SK-N-SH (cell line): ENCODE measurements at regions of chr4 and their contacts with region 1.

Region 1: DNA sequence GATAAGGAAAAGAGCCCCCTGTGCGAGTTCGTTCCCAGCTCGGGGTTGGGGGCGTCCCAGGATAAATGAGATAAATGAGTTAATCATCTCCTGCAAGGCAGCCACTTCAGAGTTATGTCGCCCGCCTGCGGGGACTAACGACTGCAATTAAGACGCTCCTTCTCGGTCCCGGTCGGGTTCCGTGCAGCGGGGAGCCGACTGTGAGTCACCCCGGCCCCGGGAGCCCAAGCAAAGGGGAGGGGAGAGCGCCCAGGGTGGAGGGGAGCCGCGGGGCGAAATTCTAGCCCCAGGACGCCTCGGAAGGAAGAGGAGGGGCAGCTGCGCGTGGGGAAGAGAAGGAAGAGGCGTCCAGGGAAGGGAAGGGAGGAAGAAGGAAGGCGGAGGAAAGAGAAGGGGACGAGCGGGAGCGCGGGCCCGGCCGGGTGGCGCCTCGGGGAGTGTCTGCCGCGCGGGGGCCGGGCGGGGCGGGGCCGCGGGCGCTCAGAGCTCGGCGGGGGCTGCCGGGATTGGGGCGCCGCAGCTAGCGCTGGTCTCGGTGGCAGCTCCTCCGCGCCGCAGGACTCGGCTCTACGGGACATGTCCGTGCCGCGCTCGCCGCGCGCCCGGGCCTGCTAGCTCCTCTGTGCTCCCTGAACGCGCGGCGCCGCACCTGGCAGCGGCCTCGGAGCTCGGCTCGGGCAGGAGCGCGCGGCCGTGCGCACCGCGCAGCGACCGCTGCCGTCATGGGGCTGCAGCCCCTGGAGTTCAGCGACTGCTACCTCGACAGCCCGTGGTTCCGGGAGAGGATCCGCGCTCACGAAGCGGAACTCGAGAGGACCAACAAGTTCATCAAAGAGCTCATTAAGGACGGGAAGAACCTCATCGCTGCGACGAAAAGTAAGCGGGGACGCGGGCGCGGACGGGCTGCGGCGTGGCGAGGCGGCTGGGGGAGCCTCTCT is at the start of gene ARHGAP10:
- DNase-seq: peak; percentile 85
- H3K4me3 ChIP-seq: peak within 1 kb of the TSS; percentile 92 to 94
- H3K27ac ChIP-seq: peak within 1 kb of the TSS; percentile 77 to 91
- H3K4me1 ChIP-seq: peaks cover 25 to 29% of the 10 kb centered on the region in 2 experiments; a peak in 3 of 4 replicates
- H3K27me3 ChIP-seq: no peaks in the 10 kb centered on the region
- CTCF ChIP-seq: no peak
- EP300 ChIP-seq: no peak; a peak in 1 of 4 replicates
- RAD21 ChIP-seq: no peak
- polyA plus RNA-seq, gene ARHGAP10: 12.0 and 15.1 TPM in 2 replicates

Region 2: GRCh38 chr4:147714575-147715401 is 17.1 kb before region 1 on chr4:
- CTCF ChIA-PET with region 1: interaction called, 12 read pairs
- POLR2A ChIA-PET with region 1: no interaction called
- DNase-seq: no peak
- H3K4me3 ChIP-seq: peak overlapping the region in 1 of 2 experiments; percentile 28; a peak in 1 of 4 replicates
- H3K27ac ChIP-seq: peak overlapping the region in 1 of 2 experiments; percentile 72; a peak in 3 of 4 replicates
- H3K4me1 ChIP-seq: 0 out of 4 replicates have a peak, but pooled peaks cover 0 to 3% of the 10 kb centered on the region in 2 experiments
- H3K27me3 ChIP-seq: no peaks in the 10 kb centered on the region
- CTCF ChIP-seq: no peak
- EP300 ChIP-seq: peak in 1 of 2 experiments; percentile 87; a peak in 2 of 4 replicates
- RAD21 ChIP-seq: no peak